ENCODE measurements at regions of chr21 and their contacts with region 1.

Region 1: DNA sequence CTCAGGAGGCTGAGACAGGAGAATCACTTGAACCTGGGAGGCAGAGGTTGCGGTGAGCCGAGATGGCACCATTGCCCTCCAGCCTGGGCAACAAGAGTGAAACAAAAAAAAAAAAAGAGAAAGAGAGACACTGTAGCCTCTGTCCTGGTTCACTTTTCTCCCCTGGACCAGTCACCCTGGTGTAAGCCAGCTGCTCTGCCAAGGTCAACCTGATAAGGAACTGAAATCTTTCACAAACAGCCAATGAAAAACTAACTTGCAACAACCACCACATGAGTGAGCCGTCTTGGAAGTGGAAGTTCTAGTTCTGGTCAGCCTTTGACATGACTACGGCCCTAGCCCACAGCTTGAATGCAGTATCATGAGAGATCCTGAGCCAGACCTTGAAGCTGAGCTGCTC is 36.8 kb upstream of the CXADR start:
- DNase-seq: no peak
- ATAC-seq: peak; percentile 6
- H3K4me3 ChIP-seq: no peak overlapping the region
- H3K4me3 Mint-ChIP-seq: no peak overlapping the region
- H3K27ac ChIP-seq: no peak overlapping the region
- H3K27ac Mint-ChIP-seq: no peak overlapping the region
- H3K4me1 ChIP-seq: no peaks in the 10 kb centered on the region
- H3K4me1 Mint-ChIP-seq: no peaks in the 10 kb centered on the region
- H3K27me3 ChIP-seq: no peaks in the 10 kb centered on the region
- H3K27me3 Mint-ChIP-seq: peaks cover 0 to 10% (median 5%) of the 10 kb centered on the region in 5 donors

Region 2: DNA sequence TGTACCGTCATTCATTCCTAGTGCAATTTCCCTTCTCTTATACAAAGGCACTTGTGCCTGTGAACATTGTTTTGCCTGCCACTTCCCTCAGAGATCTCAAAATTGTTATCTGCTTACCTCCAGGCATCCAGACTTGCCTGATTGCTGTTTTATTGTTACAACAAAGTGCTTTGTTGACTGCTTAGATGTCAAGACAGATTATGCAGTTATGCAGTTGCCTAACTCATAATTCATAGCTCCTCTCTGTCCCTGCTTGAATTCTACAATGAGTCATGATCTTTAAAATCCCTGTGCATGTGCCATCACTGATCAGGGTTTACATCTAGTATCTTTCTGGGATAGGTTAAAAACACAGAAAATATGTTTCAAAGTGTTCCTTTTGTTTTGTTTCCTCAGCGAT is 61.3 kb after region 1 on chr21:
- CTCF ChIA-PET with region 1: no interaction called
- POLR2A ChIA-PET with region 1: no interaction called
- intact Hi-C with region 1: loop called in 1 of 2 experiments (anchors 10 kb)
- DNase-seq: no peak
- ATAC-seq: no peak
- H3K4me3 ChIP-seq: no peak overlapping the region
- H3K4me3 Mint-ChIP-seq: no peak overlapping the region
- H3K27ac ChIP-seq: no peak overlapping the region
- H3K27ac Mint-ChIP-seq: no peak overlapping the region
- H3K4me1 ChIP-seq: no peaks in the 10 kb centered on the region
- H3K4me1 Mint-ChIP-seq: peaks cover 0 to 4% (median 0%) of the 10 kb centered on the region in 7 donors
- H3K27me3 ChIP-seq: no peaks in the 10 kb centered on the region
- H3K27me3 Mint-ChIP-seq: peaks cover 0 to 16% (median 5%) of the 10 kb centered on the region in 5 donors